ENCODE measurements at regions of chr6 and their contacts with region 1.

Region 1: DNA sequence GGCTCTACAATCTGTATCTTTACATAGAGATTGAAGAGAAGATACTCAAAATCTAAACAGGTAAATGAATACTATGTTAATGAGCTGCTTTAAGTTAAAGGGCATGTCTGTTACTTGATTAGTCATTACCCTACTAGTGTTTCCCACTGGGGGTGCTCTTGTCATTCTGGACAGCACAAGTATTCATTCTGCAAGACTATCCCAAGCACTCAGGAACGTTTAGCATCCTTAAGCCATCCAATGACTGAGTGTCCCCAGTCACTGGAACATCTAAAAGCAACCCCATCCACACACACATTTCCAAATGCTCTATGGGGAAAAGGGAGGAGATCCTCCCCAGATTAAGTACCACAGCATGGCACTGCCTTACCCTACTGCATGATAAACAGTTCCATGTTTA is 25.7 kb downstream of the EZR start:
- DNase-seq: peak; percentile 68
- ATAC-seq: peak; percentile 71
- H3K4me3 ChIP-seq: no peak overlapping the region
- H3K27ac ChIP-seq: peak overlapping the region; percentile 42; the same call in 1 of the 2 replicates
- H3K4me1 ChIP-seq: peaks cover 72 to 100% of the 10 kb centered on the region in 2 experiments
- H3K27me3 ChIP-seq: no peaks in the 10 kb centered on the region
- CTCF ChIP-seq: peak in 2 of 3 experiments; percentile 62 to 64; a peak in 4 of 6 replicates
- POLR2A ChIP-seq: no peak
- RAD21 ChIP-seq: no peak

Region 2: GRCh38 chr6:158780988-158781708 is 12.3 kb before region 1 on chr6:
- CTCF ChIA-PET with region 1: interaction called, 11 read pairs
- POLR2A ChIA-PET with region 1: interaction called, 4 read pairs
- RAD21 ChIA-PET with region 1: no interaction called
- intact Hi-C with region 1: no loop called
- DNase-seq: no peak
- ATAC-seq: 0 out of 2 replicates have a peak, but pooled peaks have one; percentile 0
- H3K4me3 ChIP-seq: no peak overlapping the region
- H3K27ac ChIP-seq: peak overlapping the region; percentile 34
- H3K4me1 ChIP-seq: peaks cover 60 to 98% of the 10 kb centered on the region in 2 experiments
- H3K27me3 ChIP-seq: no peaks in the 10 kb centered on the region
- CTCF ChIP-seq: no peak
- POLR2A ChIP-seq: no peak
- RAD21 ChIP-seq: no peak

Region 3: DNA sequence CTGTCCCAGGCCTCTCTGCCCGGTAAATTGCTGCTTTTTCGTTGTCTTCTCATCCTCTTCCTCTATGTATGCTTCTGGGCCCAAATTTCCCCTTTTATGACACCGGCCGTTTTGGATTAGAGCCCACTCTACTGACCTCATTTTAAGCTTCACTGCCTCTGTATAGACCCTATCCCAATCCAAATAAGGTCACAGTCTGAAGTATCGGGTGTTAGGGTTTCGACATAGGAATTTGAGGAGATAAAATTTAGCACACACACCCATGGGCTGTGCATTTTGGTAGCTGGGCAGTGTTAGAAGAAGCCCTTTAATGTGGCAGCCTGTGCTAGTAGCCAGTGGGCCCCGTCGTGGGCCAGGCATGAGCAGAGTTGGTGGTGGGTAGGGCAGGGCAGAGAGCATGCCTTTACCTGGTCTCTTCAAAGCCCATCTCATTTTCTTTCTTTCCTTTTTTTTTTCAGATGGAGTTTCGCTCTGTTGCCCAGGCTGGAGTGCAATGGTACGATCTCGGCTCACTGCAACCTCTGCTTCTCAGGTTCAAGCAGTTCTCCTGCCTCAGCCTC is 53.7 kb after region 1 on chr6:
- CTCF ChIA-PET with region 1: no interaction called
- POLR2A ChIA-PET with region 1: no interaction called
- RAD21 ChIA-PET with region 1: no interaction called
- intact Hi-C with region 1: no loop called
- DNase-seq: no peak
- ATAC-seq: no peak
- H3K4me3 ChIP-seq: no peak overlapping the region
- H3K27ac ChIP-seq: no peak overlapping the region
- H3K4me1 ChIP-seq: peaks cover 33 to 44% of the 10 kb centered on the region in 2 experiments
- H3K27me3 ChIP-seq: no peaks in the 10 kb centered on the region
- CTCF ChIP-seq: no peak
- POLR2A ChIP-seq: no peak
- RAD21 ChIP-seq: no peak

Region 4: DNA sequence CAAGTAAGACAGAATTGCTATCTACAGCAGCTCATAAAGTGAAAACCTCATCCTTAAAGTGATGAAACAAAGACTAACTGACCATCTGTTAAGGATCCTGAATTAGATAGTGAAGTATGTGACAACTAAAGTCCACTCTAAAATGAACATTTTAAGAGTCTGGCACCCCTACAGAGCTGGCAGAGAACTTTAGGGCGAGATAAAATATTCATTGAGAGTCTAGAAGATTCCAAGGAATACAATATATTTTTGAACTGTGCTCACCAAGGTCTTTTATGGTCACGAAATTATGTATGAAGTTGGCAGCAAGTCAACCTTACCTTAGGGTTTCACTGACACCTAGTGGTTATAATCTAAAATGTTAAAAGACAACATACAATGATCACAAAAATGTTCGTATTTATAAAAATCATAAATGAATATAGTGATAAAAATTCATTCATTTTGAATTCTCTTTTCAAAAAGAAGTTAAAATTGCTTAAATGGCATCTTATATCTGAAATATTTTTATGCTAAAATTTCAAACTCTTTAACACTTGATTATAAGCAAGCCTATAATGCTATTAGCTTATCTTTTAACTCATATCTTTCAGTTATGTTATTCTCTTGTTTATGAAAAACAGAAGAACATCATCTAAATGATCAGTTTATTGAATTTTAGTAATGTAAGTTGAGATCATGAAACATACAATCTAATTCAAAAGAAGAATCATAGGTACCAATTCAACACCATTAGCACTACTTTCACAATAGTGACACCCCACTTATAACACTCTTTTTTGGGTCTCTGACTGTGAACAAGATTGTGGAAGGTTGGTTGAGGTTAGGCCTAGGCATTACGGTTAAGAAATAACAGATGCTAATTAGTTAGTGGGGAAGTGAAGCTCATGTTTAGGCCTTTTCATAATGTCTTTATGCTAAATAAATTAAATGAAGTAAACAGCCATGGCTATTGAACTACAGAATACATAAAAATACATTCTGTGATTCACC is 179.1 kb after region 1 on chr6:
- CTCF ChIA-PET with region 1: interaction called, 3 read pairs
- POLR2A ChIA-PET with region 1: no interaction called
- RAD21 ChIA-PET with region 1: no interaction called
- intact Hi-C with region 1: loop called (anchors 1 kb)
- DNase-seq: peak; percentile 55
- ATAC-seq: peak; percentile 72
- H3K4me3 ChIP-seq: no peak overlapping the region
- H3K27ac ChIP-seq: peak overlapping the region; percentile 6; the same call in 1 of the 2 replicates
- H3K4me1 ChIP-seq: peaks cover 0 to 20% of the 10 kb centered on the region in 2 experiments; a peak in 2 of 4 replicates
- H3K27me3 ChIP-seq: no peaks in the 10 kb centered on the region
- CTCF ChIP-seq: peak; percentile 31 to 70 (median 59); a peak in 5 of 6 replicates
- POLR2A ChIP-seq: no peak
- RAD21 ChIP-seq: peak; percentile 93

Measured in HCT116 (cell line).